SK-N-SH (cell line): ENCODE measurements at regions of chr6 and their contacts with region 1.

Region 1: GRCh38 chr6:28981833-28982475 is 23.2 kb downstream of the ZNF311 start:
- DNase-seq: peak; percentile 55
- H3K4me3 ChIP-seq: peak overlapping the region; percentile 91 to 100
- H3K27ac ChIP-seq: peak overlapping the region; percentile 66 to 68
- H3K4me1 ChIP-seq: peaks cover 0 to 9% of the 10 kb centered on the region in 2 experiments; a peak in 1 of 4 replicates
- H3K27me3 ChIP-seq: no peaks in the 10 kb centered on the region
- CTCF ChIP-seq: no peak
- EP300 ChIP-seq: 0 out of 4 replicates have a peak, but pooled peaks of 1 of the 2 experiments have one; percentile 31
- RAD21 ChIP-seq: no peak

Region 2: DNA sequence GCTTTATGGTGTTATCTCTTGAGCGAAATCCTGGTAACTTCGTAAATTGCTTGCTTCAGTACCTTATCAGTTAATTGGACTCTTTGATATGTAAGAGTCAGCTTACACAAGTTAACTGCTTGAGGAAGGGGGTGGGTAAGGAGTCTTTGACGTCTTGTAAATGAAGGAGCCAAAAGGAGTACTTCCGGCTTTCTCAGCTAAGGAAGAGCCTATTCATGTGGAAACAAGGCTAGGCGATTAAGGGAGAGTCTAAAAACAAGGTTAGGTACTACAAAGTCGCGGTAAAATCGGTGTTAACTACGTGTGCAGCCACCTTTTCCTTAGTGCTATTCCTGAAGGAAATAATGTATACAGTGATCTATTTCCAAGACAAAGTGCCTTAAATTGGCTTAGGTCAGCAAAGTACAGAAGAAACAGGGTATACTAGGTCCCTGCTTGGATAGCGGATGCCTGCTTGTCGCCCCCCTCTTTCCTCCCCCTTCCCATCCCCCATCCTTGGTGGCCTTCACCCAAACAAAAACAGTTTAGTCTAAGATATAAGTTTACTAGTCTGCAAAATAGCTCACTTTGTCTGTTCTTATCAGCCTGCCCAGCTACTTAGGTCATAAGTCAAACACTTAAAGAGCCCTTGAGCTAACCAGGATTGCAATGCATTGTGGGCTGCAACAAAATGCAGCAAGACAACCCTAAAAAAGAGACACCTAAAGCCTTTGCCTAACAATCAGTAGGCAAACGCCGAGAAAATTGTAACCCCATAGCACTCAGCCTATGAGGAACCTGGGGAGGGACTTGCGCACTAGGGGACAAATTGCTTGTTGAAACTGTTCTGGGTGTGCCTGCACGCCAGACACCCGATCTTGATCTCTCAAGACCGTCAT is 205.4 kb before region 1 on chr6:
- CTCF ChIA-PET with region 1: no interaction called
- POLR2A ChIA-PET with region 1: no interaction called
- DNase-seq: no peak
- H3K4me3 ChIP-seq: no peak overlapping the region
- H3K27ac ChIP-seq: no peak overlapping the region
- H3K4me1 ChIP-seq: no peaks in the 10 kb centered on the region
- H3K27me3 ChIP-seq: peaks cover 87% of the 10 kb centered on the region
- CTCF ChIP-seq: no peak
- EP300 ChIP-seq: no peak
- RAD21 ChIP-seq: no peak

Region 3: GRCh38 chr6:28907394-28907793 is 74.6 kb before region 1 on chr6:
- CTCF ChIA-PET with region 1: no interaction called
- POLR2A ChIA-PET with region 1: no interaction called
- DNase-seq: no peak
- H3K4me3 ChIP-seq: no peak overlapping the region
- H3K27ac ChIP-seq: no peak overlapping the region
- H3K4me1 ChIP-seq: peaks cover 0 to 8% of the 10 kb centered on the region in 2 experiments; a peak in 1 of 4 replicates
- H3K27me3 ChIP-seq: no peaks in the 10 kb centered on the region
- CTCF ChIP-seq: no peak
- EP300 ChIP-seq: no peak
- RAD21 ChIP-seq: no peak

Region 4: GRCh38 chr6:28969129-28969528 is 12.8 kb before region 1 on chr6:
- CTCF ChIA-PET with region 1: interaction called, 10 read pairs
- POLR2A ChIA-PET with region 1: no interaction called
- DNase-seq: no peak
- H3K4me3 ChIP-seq: no peak overlapping the region
- H3K27ac ChIP-seq: no peak overlapping the region
- H3K4me1 ChIP-seq: no peaks in the 10 kb centered on the region
- H3K27me3 ChIP-seq: no peaks in the 10 kb centered on the region
- CTCF ChIP-seq: no peak
- EP300 ChIP-seq: no peak
- RAD21 ChIP-seq: no peak